ENCODE measurements at regions of chr2 and their contacts with region 1.

Region 1: DNA sequence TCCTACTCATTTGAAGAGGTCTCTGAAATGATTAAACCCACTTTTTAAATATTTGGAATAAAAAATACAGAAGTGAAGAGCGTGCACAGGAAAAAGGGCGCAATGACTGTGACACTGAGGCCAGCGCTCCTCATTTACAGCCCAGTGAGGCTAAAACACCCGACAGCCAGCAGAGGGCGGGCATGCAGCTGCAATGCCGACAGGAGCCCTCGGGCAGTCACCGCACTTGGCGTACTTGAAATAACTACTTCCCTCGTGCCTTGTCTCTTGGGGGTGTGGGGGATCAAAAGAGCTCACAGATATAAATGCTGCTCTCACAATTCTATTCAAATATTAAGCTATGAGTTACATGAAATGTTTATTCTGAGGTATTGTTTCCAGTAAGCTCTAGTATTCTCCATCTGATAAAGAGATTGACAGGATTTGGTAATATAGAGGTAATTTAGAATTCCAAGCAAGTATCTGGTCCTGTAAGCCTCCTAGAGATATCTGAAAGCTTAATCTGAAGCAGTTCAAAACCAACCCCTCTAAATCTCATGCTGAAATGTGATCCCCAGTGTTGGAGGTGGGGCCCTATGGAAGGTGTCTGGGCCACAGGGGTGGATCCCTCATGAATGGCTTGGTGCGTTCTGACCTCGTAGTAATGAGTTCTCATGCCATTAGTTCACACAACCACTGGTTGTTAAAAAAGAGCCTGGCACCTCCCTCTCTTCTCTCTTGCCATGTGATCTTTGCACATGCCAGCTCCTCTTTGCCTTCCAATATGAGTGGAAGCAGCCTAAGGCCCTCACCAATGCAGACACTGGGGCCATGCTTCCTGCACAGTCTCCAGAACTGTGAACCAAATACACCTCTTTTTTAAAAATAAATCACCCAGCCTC is 93.6 kb downstream of the ZAP70 start:
- DNase-seq: peak; percentile 83
- H3K4me3 ChIP-seq: no peak overlapping the region
- H3K27ac ChIP-seq: no peak overlapping the region
- H3K4me1 ChIP-seq: no peaks in the 10 kb centered on the region
- H3K27me3 ChIP-seq: no peaks in the 10 kb centered on the region
- CTCF ChIP-seq: peak; percentile 93

Region 2: DNA sequence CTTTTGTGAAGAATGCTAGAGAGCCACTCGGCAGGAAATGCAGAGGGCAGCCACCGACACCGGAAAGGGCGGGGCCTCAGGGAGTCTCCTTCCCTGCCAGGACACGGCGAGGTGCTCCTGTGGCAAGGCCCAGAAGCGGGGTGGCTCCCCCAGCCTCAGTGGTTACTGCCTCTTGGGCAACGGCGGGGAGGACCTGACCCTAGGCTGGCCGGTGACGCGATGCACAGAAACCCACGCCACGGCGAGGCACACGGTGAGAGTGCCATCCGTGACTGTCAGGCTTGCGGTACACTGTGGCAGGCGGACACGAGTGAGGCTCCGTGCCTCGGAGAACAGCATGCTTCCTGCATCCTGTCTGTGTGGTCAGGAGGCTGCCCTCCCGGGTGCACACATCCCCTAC is 45.8 kb before region 1 on chr2:
- intact Hi-C with region 1: no loop called
- DNase-seq: no peak
- H3K4me3 ChIP-seq: no peak overlapping the region
- H3K27ac ChIP-seq: no peak overlapping the region
- H3K4me1 ChIP-seq: no peaks in the 10 kb centered on the region
- H3K27me3 ChIP-seq: no peaks in the 10 kb centered on the region
- CTCF ChIP-seq: no peak

Region 3: DNA sequence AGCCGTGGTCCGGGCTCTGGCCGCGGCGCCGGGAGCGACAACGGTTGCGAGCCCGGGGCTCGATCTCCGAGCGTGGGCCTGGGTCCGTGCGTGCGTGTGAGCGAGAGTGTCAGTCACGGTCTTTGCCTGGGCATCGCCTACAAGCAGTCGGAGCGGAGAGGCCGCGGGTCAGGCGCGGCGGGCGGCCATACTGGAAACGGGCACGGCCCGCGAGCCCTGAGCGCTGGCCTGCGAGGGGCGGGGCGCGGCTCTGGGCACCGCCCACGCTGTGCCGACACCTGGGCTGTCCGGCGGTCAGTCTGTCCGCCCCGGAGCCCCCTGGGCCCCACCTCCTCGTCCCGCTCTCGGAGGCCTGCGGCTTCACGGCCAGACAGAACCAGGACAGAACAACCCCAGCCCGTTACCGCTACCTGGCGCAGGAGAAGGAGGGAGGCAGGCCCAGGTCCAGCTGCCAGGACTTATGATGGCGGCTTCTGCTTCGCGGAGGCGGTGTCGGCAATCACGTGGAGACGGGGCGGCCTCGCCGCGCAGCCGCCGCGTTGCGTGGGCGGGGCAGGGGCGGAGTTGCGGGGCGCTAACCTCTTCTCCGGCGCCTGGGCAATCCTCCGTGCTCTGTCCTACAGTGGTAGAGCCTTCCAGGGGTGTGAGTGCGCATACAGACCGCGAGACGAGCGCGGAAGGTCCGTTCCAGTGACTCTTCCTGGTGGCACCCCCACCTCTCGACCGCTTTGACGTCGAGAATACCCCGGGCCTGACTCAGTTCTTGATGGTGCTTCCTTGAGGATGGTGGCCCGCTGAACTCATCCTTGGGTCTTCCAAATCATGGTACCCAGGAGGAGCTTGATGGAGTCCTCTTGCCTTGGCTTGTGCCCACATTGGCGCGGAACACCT is 189.0 kb after region 1 on chr2 and contains the start of gene TMEM131:
- intact Hi-C with region 1: loop called (anchors 10 kb)
- DNase-seq: peak; percentile 95
- H3K4me3 ChIP-seq: peak within 1 kb of the TSS; percentile 66
- H3K27ac ChIP-seq: peak within 1 kb of the TSS; percentile 97
- H3K4me1 ChIP-seq: no peaks in the 10 kb centered on the region
- H3K27me3 ChIP-seq: no peaks in the 10 kb centered on the region
- CTCF ChIP-seq: no peak
- total RNA-seq, gene TMEM131: 52.4 to 60.8 TPM

Region 4: GRCh38 chr2:98175811-98176210 is 368.8 kb after region 1 on chr2:
- intact Hi-C with region 1: loop called (anchors 5 kb)
- DNase-seq: peak; percentile 34
- H3K4me3 ChIP-seq: no peak overlapping the region
- H3K27ac ChIP-seq: no peak overlapping the region
- H3K4me1 ChIP-seq: no peaks in the 10 kb centered on the region
- H3K27me3 ChIP-seq: no peaks in the 10 kb centered on the region
- CTCF ChIP-seq: no peak

Region 5: GRCh38 chr2:98269274-98269673 is 462.3 kb after region 1 on chr2:
- intact Hi-C with region 1: loop called (anchors 2 kb)
- DNase-seq: peak; percentile 61
- H3K4me3 ChIP-seq: no peak overlapping the region
- H3K27ac ChIP-seq: no peak overlapping the region
- H3K4me1 ChIP-seq: no peaks in the 10 kb centered on the region
- H3K27me3 ChIP-seq: no peaks in the 10 kb centered on the region
- CTCF ChIP-seq: peak; percentile 80

Region 6: DNA sequence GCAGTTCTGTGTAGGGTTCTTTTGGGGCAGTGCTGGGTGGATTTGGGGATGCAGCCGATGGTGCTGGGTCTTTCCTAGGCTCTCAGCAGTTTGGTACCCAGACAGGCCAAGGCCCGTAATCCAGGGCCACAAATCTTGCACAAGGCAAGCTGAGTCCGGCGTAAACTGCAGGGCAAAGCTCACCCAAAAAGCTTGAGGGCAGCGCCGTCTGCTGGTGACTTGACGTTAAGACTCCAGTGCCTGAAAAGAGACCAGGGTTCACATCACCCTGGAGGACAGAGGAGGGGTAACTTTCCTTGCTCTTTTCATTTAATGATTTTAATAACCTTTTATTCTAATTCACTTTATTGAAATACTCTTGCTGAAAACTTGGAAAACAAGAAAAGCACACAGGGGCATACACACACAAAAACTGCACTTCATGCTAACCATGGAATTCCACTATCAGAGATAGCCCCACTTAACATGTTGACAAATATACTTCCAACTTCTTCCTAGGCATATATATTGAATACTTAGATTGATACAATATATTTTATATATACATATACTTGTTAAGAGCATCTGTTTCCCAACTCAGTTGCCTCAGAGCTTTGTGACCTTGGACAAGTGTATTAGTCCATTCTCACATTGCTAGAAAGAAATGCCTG is 578.2 kb after region 1 on chr2:
- intact Hi-C with region 1: loop called (anchors 2 kb)
- DNase-seq: peak; percentile 83
- H3K4me3 ChIP-seq: no peak overlapping the region
- H3K27ac ChIP-seq: no peak overlapping the region
- H3K4me1 ChIP-seq: no peaks in the 10 kb centered on the region
- H3K27me3 ChIP-seq: no peaks in the 10 kb centered on the region
- CTCF ChIP-seq: peak; percentile 92